Dendritic cell treated with granulocyte-macrophage colony-stimulating factor and Interleukin-4, amounts not matched to agents 40 ng/mL and 50 ng/mL, for 4 days (primary cell): ENCODE measurements at regions of chr5 and their contacts with region 1.

Region 1: DNA sequence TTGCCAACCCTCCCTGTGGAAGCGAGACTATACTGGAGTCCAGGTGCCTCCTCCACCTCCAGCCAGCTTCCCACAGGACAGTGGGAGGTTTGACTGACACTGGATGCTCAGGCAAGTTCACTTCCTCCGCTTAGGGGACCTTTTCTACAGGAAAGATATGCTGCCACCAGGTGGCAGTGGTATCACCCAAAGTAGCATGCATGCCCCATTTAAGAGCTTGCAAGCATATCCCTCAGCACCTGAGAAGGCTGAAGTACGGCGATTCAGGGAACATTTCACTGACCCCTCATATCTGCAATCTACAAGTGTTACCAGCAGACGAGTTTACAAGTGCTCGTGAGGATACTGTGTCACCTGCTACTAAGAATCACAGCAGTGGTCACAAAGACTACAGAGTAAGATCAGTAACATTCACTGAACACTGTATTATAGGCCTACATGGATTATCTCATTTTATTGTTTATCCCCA is 75.5 kb downstream of the KLHL3 start:
- H3K4me3 Mint-ChIP-seq: no peak overlapping the region
- H3K27ac Mint-ChIP-seq: no peak overlapping the region
- H3K4me1 Mint-ChIP-seq: no peaks in the 10 kb centered on the region
- H3K27me3 Mint-ChIP-seq: no peaks in the 10 kb centered on the region

Region 2: GRCh38 chr5:136364307-136364706 is 1296.1 kb before region 1 on chr5:
- intact Hi-C with region 1: no loop called
- H3K4me3 Mint-ChIP-seq: no peak overlapping the region
- H3K27ac Mint-ChIP-seq: no peak overlapping the region
- H3K4me1 Mint-ChIP-seq: no peaks in the 10 kb centered on the region
- H3K27me3 Mint-ChIP-seq: peaks cover 7% of the 10 kb centered on the region

Region 3: GRCh38 chr5:137221943-137222342 is 438.4 kb before region 1 on chr5:
- intact Hi-C with region 1: no loop called
- H3K4me3 Mint-ChIP-seq: no peak overlapping the region
- H3K27ac Mint-ChIP-seq: no peak overlapping the region
- H3K4me1 Mint-ChIP-seq: no peaks in the 10 kb centered on the region
- H3K27me3 Mint-ChIP-seq: peaks cover 3% of the 10 kb centered on the region

Region 4: GRCh38 chr5:137743031-137743640 is 82.8 kb after region 1 on chr5:
- intact Hi-C with region 1: loop called (anchors 1 kb)
- H3K4me3 Mint-ChIP-seq: no peak overlapping the region
- H3K27ac Mint-ChIP-seq: no peak overlapping the region
- H3K4me1 Mint-ChIP-seq: no peaks in the 10 kb centered on the region
- H3K27me3 Mint-ChIP-seq: no peaks in the 10 kb centered on the region

Region 5: GRCh38 chr5:137815202-137815985 is 155.0 kb after region 1 on chr5:
- intact Hi-C with region 1: no loop called
- H3K4me3 Mint-ChIP-seq: no peak overlapping the region
- H3K27ac Mint-ChIP-seq: no peak overlapping the region
- H3K4me1 Mint-ChIP-seq: no peaks in the 10 kb centered on the region
- H3K27me3 Mint-ChIP-seq: no peaks in the 10 kb centered on the region